WTC11 (cell line): ENCODE measurements at regions of chr2 and their contacts with region 1.

Region 1: DNA sequence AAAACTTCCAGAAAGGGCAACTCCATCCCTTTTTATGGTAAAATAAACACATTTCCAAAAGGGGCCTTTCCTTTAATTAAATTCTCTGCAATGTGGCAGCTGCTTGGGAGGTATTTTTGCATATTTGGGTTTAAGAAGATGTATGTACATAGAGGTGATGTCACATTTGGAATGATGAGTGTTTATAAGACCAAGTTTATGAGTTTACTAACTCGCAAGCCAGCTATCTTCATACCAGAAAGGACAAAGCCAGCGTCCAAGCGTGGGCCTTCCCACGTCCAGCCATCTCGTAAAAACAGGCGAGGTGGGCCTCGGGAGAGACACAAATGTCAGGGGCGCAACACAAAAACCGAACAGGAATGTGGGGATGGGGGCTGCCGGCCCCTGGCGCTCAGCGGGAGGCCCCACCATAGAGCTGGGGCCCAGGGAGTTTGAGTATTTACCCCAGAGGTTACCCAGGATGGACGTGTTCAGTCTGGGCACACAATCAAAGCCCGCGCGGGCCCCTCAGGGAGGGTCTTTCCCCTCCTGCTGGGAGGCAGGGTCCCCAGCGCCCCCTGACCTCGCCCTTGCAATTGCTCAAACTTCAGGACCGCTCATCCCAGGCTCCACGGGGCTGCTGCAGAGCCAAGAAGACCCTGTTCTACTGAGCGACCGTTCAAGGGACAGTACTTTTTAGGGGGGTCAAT is 137.3 kb downstream of the TWIST2 start:
- DNase-seq: no peak
- ATAC-seq: no peak
- H3K4me3 Mint-ChIP-seq: no peak overlapping the region
- H3K27ac Mint-ChIP-seq: no peak overlapping the region
- H3K4me1 Mint-ChIP-seq: no peaks in the 10 kb centered on the region; the same call in 1 of the 2 replicates
- H3K27me3 Mint-ChIP-seq: no peaks in the 10 kb centered on the region
- CTCF ChIP-seq: no peak

Region 2: GRCh38 chr2:238974501-238975166 is 10.6 kb before region 1 on chr2:
- CTCF ChIA-PET with region 1: interaction called, 10 read pairs
- POLR2A ChIA-PET with region 1: no interaction called
- DNase-seq: no peak
- ATAC-seq: peak; percentile 73
- H3K4me3 Mint-ChIP-seq: no peak overlapping the region
- H3K27ac Mint-ChIP-seq: no peak overlapping the region
- H3K4me1 Mint-ChIP-seq: no peaks in the 10 kb centered on the region
- H3K27me3 Mint-ChIP-seq: peaks cover 13% of the 10 kb centered on the region
- CTCF ChIP-seq: no peak